CD8-positive, alpha-beta T cell (primary cell): ENCODE measurements at regions of chr11 and their contacts with region 1.

Region 1: DNA sequence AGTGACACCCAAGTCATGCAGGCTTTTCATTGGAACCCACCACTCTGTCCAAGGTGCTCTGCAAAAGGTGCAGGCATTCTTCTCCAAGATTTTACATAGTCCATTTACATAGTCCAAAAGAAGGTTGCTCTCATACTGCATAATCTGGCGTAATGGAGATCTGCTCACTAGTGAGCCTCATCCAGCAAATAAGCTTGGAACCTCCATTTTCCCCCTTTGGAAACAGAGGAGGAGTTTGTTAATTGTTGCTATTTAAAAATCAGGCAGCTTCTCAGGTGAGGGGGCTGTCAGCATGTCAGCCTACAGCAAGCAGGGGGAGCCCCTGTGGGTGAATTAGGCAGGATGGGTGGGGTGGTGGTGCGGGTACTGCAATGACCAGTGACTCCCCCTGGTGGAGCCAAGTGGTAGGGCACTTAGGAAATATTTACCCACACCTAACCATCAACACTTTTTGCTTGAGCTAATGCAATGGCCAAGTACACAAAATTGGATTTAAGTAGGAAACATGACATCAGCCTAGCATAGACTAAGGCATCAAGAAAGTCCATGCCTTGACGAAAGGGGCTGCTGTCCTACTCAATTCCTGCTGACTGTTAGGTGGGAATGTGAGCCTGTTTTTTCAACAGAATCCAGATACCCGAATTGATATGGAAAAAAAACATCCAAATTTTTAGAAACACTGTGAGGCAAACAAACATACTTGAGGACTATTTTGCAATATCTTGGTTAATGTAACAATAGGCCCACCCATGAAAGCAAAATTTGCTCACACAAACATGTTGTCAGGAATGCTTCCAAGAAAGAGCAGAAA is 64.5 kb downstream of the AMBRA1 start:
- DNase-seq: peak; percentile 48 to 86 (median 79)
- ATAC-seq: peak; percentile 100
- H3K4me3 ChIP-seq: no peak overlapping the region
- H3K4me3 Mint-ChIP-seq: no peak overlapping the region
- H3K27ac ChIP-seq: no peak overlapping the region
- H3K27ac Mint-ChIP-seq: no peak overlapping the region
- H3K4me1 ChIP-seq: peaks cover 6% of the 10 kb centered on the region
- H3K4me1 Mint-ChIP-seq: peaks cover 42% of the 10 kb centered on the region
- H3K27me3 ChIP-seq: no peaks in the 10 kb centered on the region
- H3K27me3 Mint-ChIP-seq: no peaks in the 10 kb centered on the region
- CTCF ChIP-seq: peak; percentile 93

Region 2: GRCh38 chr11:46392421-46393230 is 136.7 kb before region 1 on chr11:
- CTCF ChIA-PET with region 1: interaction called, 3 read pairs
- POLR2A ChIA-PET with region 1: no interaction called
- intact Hi-C with region 1: loop called in 1 of 2 experiments (anchors 1 kb)
- DNase-seq: peak; percentile 59 to 86 (median 76)
- ATAC-seq: peak; percentile 91
- H3K4me3 ChIP-seq: no peak overlapping the region
- H3K4me3 Mint-ChIP-seq: peak overlapping the region; percentile 67
- H3K27ac ChIP-seq: no peak overlapping the region
- H3K27ac Mint-ChIP-seq: no peak overlapping the region
- H3K4me1 ChIP-seq: peaks cover 26% of the 10 kb centered on the region
- H3K4me1 Mint-ChIP-seq: peaks cover 24% of the 10 kb centered on the region
- H3K27me3 ChIP-seq: peaks cover 31 to 33% of the 10 kb centered on the region in 2 experiments
- H3K27me3 Mint-ChIP-seq: peaks cover 36% of the 10 kb centered on the region
- CTCF ChIP-seq: no peak

Region 3: GRCh38 chr11:46489661-46490560 is 39.4 kb before region 1 on chr11:
- CTCF ChIA-PET with region 1: interaction called, 11 read pairs
- POLR2A ChIA-PET with region 1: no interaction called
- intact Hi-C with region 1: loop called (anchors 1 to 2 kb)
- DNase-seq: peak in 7 of 9 experiments; percentile 5 to 61 (median 32)
- ATAC-seq: peak; percentile 59
- H3K4me3 ChIP-seq: no peak overlapping the region
- H3K4me3 Mint-ChIP-seq: no peak overlapping the region
- H3K27ac ChIP-seq: no peak overlapping the region
- H3K27ac Mint-ChIP-seq: no peak overlapping the region
- H3K4me1 ChIP-seq: no peaks in the 10 kb centered on the region
- H3K4me1 Mint-ChIP-seq: peaks cover 11% of the 10 kb centered on the region
- H3K27me3 ChIP-seq: no peaks in the 10 kb centered on the region
- H3K27me3 Mint-ChIP-seq: no peaks in the 10 kb centered on the region
- CTCF ChIP-seq: peak; percentile 61

Region 4: GRCh38 chr11:46778416-46778815 is 249.1 kb after region 1 on chr11:
- CTCF ChIA-PET with region 1: no interaction called
- POLR2A ChIA-PET with region 1: no interaction called
- intact Hi-C with region 1: no loop called
- DNase-seq: no peak
- ATAC-seq: no peak
- H3K4me3 ChIP-seq: no peak overlapping the region
- H3K4me3 Mint-ChIP-seq: no peak overlapping the region
- H3K27ac ChIP-seq: no peak overlapping the region
- H3K27ac Mint-ChIP-seq: no peak overlapping the region
- H3K4me1 ChIP-seq: no peaks in the 10 kb centered on the region
- H3K4me1 Mint-ChIP-seq: no peaks in the 10 kb centered on the region
- H3K27me3 ChIP-seq: no peaks in the 10 kb centered on the region
- H3K27me3 Mint-ChIP-seq: no peaks in the 10 kb centered on the region
- CTCF ChIP-seq: no peak